AG04449 (cell line): ENCODE measurements at regions of chr4 and their contacts with region 1.

Region 1: DNA sequence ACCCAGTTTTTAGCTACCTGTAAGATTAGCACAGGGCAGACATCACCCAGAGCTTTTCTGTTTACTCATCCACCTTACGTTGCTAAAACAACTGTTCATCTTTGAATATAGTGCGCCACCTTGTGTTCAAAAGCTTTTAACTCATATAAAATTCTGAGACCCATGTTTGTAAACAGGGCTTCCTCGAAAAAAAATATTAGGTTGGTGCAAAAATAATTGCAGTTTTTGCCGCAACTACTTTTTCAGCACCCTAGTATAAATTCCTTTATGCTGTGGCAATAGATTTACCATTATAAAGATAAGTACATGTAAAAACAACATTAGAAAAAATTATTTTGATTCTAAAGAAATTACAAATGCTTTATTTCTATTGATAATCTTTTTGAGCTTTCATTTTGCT is 147.9 kb downstream of the LRBA start:
- DNase-seq: peak; percentile 14
- H3K4me3 ChIP-seq: no peak overlapping the region
- CTCF ChIP-seq: peak; percentile 20

Region 2: GRCh38 chr4:149980941-149981340 is 886.2 kb before region 1 on chr4:
- CTCF ChIA-PET with region 1: interaction called, 34 read pairs
- POLR2A ChIA-PET with region 1: no interaction called
- DNase-seq: no peak
- H3K4me3 ChIP-seq: no peak overlapping the region
- CTCF ChIP-seq: peak; percentile 80

Region 3: GRCh38 chr4:150251752-150252190 is 615.4 kb before region 1 on chr4:
- CTCF ChIA-PET with region 1: interaction called, 14 read pairs
- POLR2A ChIA-PET with region 1: no interaction called
- DNase-seq: no peak
- H3K4me3 ChIP-seq: no peak overlapping the region
- CTCF ChIP-seq: no peak

Region 4: GRCh38 chr4:150264595-150265161 is 602.5 kb before region 1 on chr4:
- CTCF ChIA-PET with region 1: interaction called, 13 read pairs
- POLR2A ChIA-PET with region 1: no interaction called
- DNase-seq: no peak
- H3K4me3 ChIP-seq: no peak overlapping the region
- CTCF ChIP-seq: no peak

Region 5: DNA sequence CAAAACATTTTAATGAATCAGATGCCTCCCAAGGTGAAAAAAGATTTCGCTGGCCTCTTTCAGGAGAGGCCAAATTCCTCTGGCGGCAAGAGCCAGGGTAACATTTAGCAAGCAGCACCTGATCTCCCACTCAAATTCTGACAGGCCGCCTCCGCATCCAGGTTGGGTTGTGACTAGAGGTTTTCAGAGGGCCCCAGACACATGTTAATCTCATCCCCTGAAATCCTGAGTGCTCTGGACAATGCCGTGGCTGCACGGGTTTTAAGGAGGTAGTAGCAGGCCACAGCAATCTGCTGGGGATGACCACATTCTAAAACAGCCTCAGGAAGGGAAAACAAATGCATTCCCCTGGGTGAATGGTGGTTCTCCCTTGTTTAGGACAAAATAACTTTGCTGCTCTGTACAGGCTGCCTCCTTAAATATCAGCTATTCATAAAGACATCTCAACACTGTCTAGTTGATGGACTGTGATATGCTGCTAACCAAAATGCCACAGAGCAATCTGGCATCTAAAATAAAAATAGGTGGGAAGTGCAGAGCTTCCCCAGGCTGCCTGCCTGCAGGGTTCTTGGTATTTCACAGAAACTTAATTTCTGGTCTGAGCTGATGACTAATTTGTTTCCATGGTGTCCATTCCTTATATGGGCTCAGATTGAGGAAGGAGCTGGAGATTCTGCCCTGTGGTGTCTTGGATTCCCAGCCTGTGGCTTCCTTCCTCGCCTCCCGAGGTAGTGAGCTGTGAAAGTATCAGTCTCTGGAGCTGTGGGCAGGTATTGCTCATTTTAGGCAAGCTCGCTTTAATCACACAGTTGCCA is 586.9 kb before region 1 on chr4:
- CTCF ChIA-PET with region 1: interaction called, 22 read pairs
- POLR2A ChIA-PET with region 1: no interaction called
- DNase-seq: peak; percentile 74
- H3K4me3 ChIP-seq: no peak overlapping the region
- CTCF ChIP-seq: no peak

Region 6: DNA sequence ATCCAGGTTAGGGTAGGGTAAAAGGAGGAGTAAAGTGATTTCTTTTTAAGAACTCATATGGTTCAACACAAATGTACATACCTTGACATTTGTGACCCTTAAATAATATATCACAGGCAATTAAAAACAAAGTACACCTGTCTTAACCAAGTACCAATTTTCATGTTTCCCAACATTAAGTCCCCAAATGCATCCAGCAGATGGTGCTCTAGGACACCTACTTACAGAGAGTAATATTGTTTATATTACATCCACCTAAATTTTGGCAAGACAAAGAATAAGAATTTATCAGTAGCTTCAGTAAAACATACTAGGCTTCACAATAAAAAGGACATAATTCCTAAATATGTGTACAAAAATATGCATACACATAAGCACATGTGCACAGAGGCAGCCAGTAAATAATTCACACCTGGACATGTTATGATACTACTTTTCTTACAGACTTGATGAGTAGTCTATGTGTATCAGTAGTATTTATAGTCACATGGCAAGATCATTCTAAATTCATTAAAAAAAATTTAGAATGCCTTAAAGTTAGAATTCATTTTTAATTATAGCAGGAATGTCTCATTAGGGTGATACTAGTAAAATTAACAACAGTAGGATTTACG is 569.2 kb before region 1 on chr4:
- CTCF ChIA-PET with region 1: interaction called, 244 read pairs
- POLR2A ChIA-PET with region 1: no interaction called
- DNase-seq: no peak
- H3K4me3 ChIP-seq: no peak overlapping the region
- CTCF ChIP-seq: peak; percentile 49

Region 7: DNA sequence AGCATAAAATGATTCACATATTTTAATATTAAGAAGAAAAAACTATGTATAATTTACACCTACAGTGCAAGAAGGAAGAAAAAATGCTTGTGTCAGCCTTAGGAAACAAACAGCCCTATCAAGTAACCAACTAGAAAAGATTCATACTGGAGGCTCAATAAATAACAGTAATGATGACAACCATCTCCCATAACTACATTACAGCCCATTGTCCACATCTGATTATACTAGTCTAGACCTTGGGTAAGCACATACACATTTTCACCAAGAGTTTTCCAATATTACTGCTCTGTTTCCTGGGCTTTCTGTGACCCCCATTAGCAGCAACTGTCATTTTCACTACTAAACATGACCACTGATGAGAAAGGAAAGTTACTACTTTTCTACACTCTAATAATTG is 115.5 kb before region 1 on chr4:
- CTCF ChIA-PET with region 1: no interaction called
- POLR2A ChIA-PET with region 1: no interaction called
- DNase-seq: no peak
- H3K4me3 ChIP-seq: no peak overlapping the region
- CTCF ChIP-seq: no peak

Region 8: GRCh38 chr4:150855981-150856510 is 11.1 kb before region 1 on chr4:
- CTCF ChIA-PET with region 1: interaction called, 51 read pairs
- POLR2A ChIA-PET with region 1: no interaction called
- DNase-seq: no peak
- H3K4me3 ChIP-seq: no peak overlapping the region
- CTCF ChIP-seq: no peak

Region 9: DNA sequence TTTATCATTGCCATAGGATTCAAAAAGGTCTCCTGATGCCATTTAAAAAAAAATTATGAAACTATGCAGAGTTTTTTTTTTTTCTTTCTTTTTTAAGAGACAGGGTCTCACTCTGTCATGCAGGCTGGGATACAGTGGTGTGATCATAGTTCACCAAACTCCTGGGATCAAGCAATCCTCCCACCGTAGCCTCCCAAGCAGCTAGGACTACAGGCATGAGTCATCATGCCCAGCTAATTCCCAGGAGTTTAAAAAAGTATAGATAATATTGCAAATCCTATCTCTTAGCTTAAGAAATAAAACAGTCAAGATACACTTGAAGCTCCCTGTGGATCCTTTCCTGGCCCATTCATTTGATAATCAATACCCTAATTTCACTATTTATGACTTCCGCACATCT is 351.2 kb after region 1 on chr4:
- CTCF ChIA-PET with region 1: no interaction called
- POLR2A ChIA-PET with region 1: no interaction called
- DNase-seq: no peak
- H3K4me3 ChIP-seq: no peak overlapping the region
- CTCF ChIP-seq: no peak